ENCODE measurements at regions of chr5 and their contacts with region 1.

Region 1: GRCh38 chr5:150217873-150218692 is 28.2 kb downstream of the SLC6A7 start:
- DNase-seq: peak; percentile 73 to 98 (median 89)

Region 2: DNA sequence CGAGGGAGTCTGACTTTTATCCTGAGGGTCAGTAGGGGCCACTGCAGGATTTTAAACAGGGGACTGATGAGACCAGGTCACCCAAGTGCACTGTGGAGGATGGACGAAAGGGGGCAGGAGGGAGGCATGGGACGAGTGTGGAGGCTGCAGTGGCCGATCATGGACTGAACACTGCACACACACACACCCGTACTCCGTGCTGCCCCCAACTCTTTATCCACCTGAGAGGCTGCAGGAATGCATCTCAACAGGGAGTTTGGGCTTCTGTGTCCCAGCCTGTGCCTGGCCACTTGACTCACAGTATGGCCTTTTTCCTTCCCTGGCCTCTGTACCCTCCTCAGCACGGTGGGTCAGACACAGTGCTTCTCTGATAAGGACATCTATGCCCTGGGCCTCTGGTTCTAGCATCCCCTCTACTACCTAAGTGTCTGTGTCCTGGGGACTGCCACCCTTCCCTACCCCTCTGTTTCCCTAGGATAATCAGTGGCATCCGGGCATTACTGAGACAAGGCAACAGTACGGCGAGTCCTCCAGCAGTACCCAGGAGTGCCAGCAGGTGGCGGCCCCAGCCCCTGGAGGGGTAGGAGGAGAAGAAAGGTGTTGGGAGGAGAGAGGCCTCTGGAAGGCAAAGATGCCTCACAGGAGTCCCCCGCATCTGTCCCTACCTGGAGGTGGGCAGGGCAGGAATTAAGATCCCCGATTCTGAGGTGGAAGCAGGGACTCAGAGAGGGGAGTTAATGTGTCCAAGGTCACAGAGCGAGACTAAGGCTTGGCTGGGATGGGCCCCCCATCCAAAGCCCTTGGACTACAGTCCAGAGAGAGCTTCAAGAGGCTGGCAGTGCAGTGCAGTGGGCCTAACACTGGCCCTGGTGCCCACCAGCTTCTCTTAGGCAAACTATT is 56.6 kb before region 1 on chr5:
- intact Hi-C with region 1: loop called (anchors 1 kb)
- DNase-seq: peak; percentile 68 to 97 (median 86)

Region 3: DNA sequence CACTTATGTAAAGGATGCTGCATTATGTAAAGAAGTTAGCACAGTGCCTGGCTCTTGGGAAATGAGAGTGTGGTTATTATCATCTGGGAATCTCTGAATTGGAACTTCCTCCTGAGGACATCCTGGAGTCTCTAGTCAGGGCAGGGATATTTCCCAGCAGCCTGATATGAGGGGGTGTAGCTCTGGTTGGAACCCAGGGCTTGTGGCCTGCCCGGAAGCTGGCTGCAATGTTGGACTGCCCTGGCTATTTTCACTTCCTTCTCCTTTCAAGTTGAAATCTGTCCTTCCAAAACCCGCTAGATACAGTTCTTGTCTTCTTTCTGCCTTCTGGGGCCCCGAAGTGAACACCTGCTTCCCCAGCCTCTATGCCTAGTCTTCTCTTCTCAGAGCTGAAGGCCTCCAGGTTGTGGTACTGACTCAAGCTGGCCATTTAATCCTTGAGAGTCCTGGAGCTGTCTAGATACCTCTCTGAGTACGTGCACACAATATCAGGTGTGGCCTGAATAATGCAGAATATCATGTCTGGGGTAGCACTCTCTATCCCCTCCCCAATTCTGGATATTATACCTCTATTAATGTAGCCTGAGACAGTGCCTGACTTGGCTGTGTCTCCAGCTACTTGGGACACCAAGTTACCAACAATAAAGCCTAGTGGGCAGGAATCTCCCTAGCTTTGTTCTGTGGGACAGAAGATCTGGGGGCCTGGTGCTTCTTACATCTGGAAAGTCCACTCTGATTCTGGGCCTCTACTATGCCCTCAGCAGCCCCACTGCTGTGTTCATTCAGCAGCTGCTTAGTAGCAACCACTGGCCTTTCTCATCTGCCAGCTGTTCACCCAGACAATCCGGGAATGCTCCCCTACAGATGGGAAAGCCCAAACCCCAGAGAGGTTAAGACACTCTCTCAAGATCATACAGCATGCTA is 16.8 kb after region 1 on chr5:
- intact Hi-C with region 1: no loop called
- DNase-seq: peak in 2 of 10 donors; percentile 44 to 61

Region 4: DNA sequence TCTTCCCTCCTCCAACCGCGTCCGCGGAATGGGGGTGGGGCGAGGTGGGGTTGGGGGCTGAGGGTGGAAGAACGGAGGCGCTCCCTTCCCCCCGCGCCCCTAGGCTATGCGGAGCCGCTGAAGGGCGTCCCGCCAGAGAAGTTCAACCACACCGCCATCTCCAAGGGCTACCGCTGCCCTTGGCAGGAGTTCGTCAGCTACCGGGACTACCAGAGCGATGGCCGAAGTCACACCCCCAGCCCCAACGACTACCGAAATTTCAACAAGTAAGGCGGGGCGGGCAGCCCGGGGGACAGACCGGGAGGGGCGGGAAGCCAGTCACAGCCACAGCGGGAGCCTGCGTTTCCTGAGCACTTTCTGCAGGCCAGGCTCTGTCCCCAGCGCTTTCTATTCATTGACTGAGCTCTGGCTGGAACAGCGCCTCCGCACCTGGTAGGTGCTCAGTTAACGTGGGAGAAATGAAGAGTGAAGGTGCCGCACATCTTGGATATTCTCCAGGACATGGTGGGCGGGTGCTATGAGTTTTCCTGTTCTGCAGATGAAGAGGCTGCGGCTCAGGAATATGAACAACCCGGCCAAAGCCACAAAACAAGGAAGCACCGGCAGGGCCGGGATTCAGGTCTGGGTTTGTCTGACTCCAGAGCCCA is 454.3 kb after region 1 on chr5:
- intact Hi-C with region 1: no loop called
- DNase-seq: peak in 7 of 10 donors; percentile 39 to 91 (median 57)

Region 5: DNA sequence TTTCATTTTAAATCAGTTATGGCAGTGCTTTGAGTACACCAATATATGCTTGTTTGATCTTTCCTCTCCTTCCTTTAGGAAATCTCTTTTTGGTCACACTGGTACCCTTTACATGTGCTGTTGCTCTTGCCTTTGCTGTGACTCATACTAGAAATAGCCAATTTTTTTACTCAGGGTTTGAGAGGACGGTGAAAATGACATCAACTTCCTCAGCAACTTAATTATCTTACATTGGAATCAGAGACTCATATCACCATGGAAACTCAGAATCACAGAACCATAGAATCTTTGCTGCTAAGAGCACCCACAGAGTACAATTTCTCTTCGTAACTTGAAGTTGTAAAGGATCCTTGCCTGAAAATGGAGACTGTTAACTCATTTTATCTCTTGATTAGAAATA is 700.5 kb after region 1 on chr5:
- intact Hi-C with region 1: no loop called
- DNase-seq: no peak

Measured in posterior cingulate gyrus (tissue), 11 donors.